PC-3 (cell line): ENCODE measurements at regions of chr16 and their contacts with region 1.

Region 1: DNA sequence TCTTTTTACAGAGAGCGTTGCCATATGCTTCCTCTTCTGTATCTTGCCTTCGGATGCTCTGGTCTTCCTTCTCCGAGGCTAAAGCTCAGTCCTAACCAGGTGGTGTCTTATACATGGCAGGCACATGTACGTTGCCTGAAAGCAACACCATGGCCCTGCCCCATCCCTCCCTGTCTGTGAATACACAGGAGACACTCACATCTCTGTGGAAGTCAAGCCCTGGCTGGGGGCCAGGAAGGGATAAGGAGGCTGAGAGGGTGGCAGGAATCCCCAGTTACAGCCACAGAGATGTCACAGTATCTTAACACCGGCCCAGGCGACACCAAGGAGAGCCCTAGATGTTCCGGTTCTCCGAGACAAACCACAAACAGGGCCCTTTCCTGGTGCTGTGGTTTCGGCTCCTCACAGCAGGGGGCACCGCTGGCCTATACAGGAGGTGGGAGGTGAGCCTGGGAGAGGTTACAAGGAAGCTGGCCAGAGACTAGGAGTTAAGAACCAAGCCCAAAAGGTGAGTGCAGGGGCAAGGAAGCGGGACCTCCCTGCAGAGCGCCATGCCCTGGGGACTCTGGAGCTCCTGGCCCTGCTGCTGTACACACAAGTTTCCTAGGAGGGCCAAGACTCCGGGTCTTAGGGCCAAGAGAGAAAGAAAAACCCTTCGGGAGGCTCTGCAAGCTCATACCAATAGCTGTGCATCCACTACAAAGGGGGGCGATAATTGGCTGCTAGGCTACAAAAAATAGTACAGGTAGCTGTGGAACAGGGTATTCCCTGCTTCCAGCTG is 41.7 kb downstream of the SRL start:
- DNase-seq: peak; percentile 69
- ATAC-seq: peak; percentile 91
- H3K4me3 ChIP-seq: no peak overlapping the region
- H3K27ac ChIP-seq: no peak overlapping the region
- H3K4me1 ChIP-seq: no peaks in the 10 kb centered on the region
- H3K27me3 ChIP-seq: no peaks in the 10 kb centered on the region
- CTCF ChIP-seq: peak; percentile 71

Region 2: GRCh38 chr16:3934491-3935181 is 265.6 kb before region 1 on chr16:
- CTCF ChIA-PET with region 1: interaction called, 17 read pairs
- POLR2A ChIA-PET with region 1: no interaction called
- intact Hi-C with region 1: no loop called
- DNase-seq: no peak
- ATAC-seq: no peak
- H3K4me3 ChIP-seq: no peak overlapping the region
- H3K27ac ChIP-seq: no peak overlapping the region
- H3K4me1 ChIP-seq: no peaks in the 10 kb centered on the region
- H3K27me3 ChIP-seq: no peaks in the 10 kb centered on the region
- CTCF ChIP-seq: no peak

Region 3: GRCh38 chr16:4232541-4233386 is 32.6 kb after region 1 on chr16:
- CTCF ChIA-PET with region 1: no interaction called
- POLR2A ChIA-PET with region 1: no interaction called
- intact Hi-C with region 1: no loop called
- DNase-seq: no peak
- ATAC-seq: no peak
- H3K4me3 ChIP-seq: no peak overlapping the region
- H3K27ac ChIP-seq: no peak overlapping the region
- H3K4me1 ChIP-seq: no peaks in the 10 kb centered on the region
- H3K27me3 ChIP-seq: no peaks in the 10 kb centered on the region
- CTCF ChIP-seq: no peak

Region 4: GRCh38 chr16:4371357-4372000 is 171.3 kb after region 1 on chr16 and contains the start of gene VASN:
- CTCF ChIA-PET with region 1: no interaction called
- POLR2A ChIA-PET with region 1: no interaction called
- intact Hi-C with region 1: no loop called
- DNase-seq: peak; percentile 70
- ATAC-seq: peak; percentile 39
- H3K4me3 ChIP-seq: peak within 1 kb of the TSS; percentile 91
- H3K27ac ChIP-seq: no peak within 1 kb of the TSS
- H3K4me1 ChIP-seq: peaks cover 75% of the 10 kb centered on the region
- H3K27me3 ChIP-seq: no peaks in the 10 kb centered on the region
- CTCF ChIP-seq: no peak
- total RNA-seq, gene VASN: 12.2 and 13.6 TPM in 2 replicates